WTC11 (cell line): ENCODE measurements at regions of chr22 and their contacts with region 1.

Region 1: GRCh38 chr22:40024201-40025061 is 29.7 kb downstream of the FAM83F start:
- DNase-seq: peak; percentile 84
- ATAC-seq: peak; percentile 73
- H3K4me3 Mint-ChIP-seq: no peak overlapping the region
- H3K27ac Mint-ChIP-seq: no peak overlapping the region; the same call in 1 of the 2 replicates
- H3K4me1 Mint-ChIP-seq: peaks cover 11% of the 10 kb centered on the region
- H3K27me3 Mint-ChIP-seq: no peaks in the 10 kb centered on the region
- CTCF ChIP-seq: peak; percentile 67

Region 2: GRCh38 chr22:39808081-39808480 is 216.3 kb before region 1 on chr22:
- CTCF ChIA-PET with region 1: interaction called, 10 read pairs
- POLR2A ChIA-PET with region 1: no interaction called
- DNase-seq: peak; percentile 78
- ATAC-seq: peak; percentile 76
- H3K4me3 Mint-ChIP-seq: no peak overlapping the region
- H3K27ac Mint-ChIP-seq: no peak overlapping the region
- H3K4me1 Mint-ChIP-seq: peaks cover 3% of the 10 kb centered on the region; the same call in 1 of the 2 replicates
- H3K27me3 Mint-ChIP-seq: peaks cover under 1% of the 10 kb centered on the region
- CTCF ChIP-seq: peak; percentile 43

Region 3: DNA sequence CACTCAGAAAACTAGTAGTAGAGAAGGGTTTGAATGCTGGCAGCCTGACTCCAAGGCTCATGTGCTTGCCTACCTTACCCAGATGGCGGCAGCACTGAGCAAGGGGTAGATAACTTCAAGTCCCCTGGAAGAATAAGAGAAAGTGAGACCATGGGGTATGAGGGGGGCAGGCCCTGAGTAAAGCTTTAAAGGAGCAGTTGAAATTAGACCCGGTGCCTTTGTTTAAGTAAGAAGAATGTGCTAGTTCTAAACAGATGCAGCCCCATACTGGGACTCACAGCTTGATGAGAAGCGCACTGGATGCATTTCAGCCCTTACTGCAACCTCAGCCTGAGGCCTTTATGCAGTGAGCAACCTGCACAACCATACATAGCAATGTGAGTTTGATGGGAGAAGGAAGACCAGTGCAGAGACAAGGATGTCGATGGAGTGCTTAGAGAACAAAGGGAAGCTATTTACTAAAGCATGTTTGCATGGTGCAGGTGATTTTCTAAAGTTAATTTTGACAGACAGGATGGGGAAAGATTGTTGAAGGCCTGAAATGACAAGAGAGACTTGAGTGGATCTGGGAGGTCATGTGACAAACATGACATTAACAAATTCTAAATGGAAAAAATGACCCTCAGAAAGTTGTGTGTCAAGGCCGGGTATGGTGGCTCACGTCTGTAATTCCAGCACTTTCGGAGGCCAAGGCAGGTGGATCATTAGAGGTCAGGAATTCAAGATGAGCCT is 91.3 kb before region 1 on chr22:
- CTCF ChIA-PET with region 1: interaction called, 146 read pairs
- POLR2A ChIA-PET with region 1: interaction called, 6 read pairs
- DNase-seq: peak; percentile 89
- ATAC-seq: peak; percentile 95
- H3K4me3 Mint-ChIP-seq: no peak overlapping the region
- H3K27ac Mint-ChIP-seq: peak overlapping the region; percentile 48
- H3K4me1 Mint-ChIP-seq: peaks cover 48% of the 10 kb centered on the region
- H3K27me3 Mint-ChIP-seq: no peaks in the 10 kb centered on the region; the same call in 1 of the 2 replicates
- CTCF ChIP-seq: peak; percentile 97

Region 4: DNA sequence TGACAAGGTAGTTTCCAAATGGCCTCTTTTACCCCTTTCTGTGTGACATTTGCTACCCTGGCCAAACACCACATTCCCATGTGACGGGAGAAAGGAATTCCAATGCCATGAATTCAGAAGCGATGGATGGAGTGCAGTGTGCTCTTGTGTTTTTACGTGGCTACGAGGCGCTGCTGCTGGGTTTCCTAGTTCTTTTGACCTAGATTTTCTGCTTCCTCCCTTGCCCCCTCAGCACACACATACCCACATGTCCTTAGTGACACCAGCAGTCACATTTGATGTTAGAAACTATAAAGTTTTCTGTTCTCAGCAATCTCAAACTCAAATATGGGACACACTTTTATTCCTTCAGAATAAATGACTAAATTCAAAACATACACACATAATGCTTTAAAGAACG is 72.1 kb before region 1 on chr22:
- CTCF ChIA-PET with region 1: interaction called, 37 read pairs
- POLR2A ChIA-PET with region 1: no interaction called
- DNase-seq: no peak
- ATAC-seq: no peak
- H3K4me3 Mint-ChIP-seq: no peak overlapping the region
- H3K27ac Mint-ChIP-seq: no peak overlapping the region
- H3K4me1 Mint-ChIP-seq: peaks cover 23% of the 10 kb centered on the region
- H3K27me3 Mint-ChIP-seq: peaks cover 6% of the 10 kb centered on the region; the same call in 1 of the 2 replicates
- CTCF ChIP-seq: no peak

Region 5: GRCh38 chr22:39997939-39998338 is 26.5 kb before region 1 on chr22:
- CTCF ChIA-PET with region 1: interaction called, 25 read pairs
- POLR2A ChIA-PET with region 1: no interaction called
- DNase-seq: peak; percentile 62
- ATAC-seq: peak; percentile 31
- H3K4me3 Mint-ChIP-seq: peak overlapping the region; percentile 64
- H3K27ac Mint-ChIP-seq: peak overlapping the region; percentile 100
- H3K4me1 Mint-ChIP-seq: peaks cover 79% of the 10 kb centered on the region
- H3K27me3 Mint-ChIP-seq: peaks cover 8% of the 10 kb centered on the region
- CTCF ChIP-seq: no peak

Region 6: DNA sequence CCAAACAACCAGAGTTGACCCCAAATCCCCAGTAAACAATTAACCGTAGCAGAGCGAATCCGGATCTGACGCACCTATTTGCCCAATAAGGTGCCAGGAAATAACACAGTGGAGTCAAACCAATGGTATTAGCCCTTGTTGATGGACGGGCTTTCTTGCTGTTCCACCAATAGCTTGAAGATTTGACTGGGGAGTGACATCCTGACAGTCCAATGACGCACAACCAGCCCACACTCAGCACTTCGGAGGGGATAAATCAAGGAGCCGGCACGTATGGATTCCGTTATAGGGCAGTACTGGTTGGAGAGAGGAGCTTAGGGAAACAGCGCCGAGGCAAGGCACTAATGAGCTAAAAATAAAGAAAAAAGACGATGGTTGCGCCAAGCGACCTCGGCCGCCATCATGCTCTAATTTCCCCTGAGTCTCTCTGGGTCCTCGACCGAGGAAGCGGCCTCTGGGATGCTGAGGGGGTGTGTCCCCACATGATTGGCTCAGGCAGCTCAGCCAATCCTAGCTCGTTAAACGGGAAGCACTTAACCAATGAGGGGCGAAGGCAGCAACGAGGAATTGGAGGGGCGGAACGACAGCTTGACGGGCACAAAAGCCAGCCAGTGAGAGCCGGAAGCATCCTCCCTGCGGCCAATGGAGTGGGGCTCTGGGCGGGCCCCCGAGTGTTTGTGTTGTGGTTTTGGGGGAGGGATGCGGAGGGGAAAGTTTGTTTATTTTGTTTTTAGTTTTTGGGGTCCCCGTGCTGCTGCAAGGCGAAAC is 19.9 kb after region 1 on chr22:
- CTCF ChIA-PET with region 1: interaction called, 18 read pairs
- POLR2A ChIA-PET with region 1: interaction called, 3 read pairs
- DNase-seq: peak; percentile 98
- ATAC-seq: peak; percentile 91
- H3K4me3 Mint-ChIP-seq: peak overlapping the region; percentile 93
- H3K27ac Mint-ChIP-seq: peak overlapping the region; percentile 99
- H3K4me1 Mint-ChIP-seq: peaks cover 16% of the 10 kb centered on the region
- H3K27me3 Mint-ChIP-seq: peaks cover 17% of the 10 kb centered on the region
- CTCF ChIP-seq: no peak